GM13976 (cell line): ENCODE measurements at regions of chr1 and their contacts with region 1.

Region 1: DNA sequence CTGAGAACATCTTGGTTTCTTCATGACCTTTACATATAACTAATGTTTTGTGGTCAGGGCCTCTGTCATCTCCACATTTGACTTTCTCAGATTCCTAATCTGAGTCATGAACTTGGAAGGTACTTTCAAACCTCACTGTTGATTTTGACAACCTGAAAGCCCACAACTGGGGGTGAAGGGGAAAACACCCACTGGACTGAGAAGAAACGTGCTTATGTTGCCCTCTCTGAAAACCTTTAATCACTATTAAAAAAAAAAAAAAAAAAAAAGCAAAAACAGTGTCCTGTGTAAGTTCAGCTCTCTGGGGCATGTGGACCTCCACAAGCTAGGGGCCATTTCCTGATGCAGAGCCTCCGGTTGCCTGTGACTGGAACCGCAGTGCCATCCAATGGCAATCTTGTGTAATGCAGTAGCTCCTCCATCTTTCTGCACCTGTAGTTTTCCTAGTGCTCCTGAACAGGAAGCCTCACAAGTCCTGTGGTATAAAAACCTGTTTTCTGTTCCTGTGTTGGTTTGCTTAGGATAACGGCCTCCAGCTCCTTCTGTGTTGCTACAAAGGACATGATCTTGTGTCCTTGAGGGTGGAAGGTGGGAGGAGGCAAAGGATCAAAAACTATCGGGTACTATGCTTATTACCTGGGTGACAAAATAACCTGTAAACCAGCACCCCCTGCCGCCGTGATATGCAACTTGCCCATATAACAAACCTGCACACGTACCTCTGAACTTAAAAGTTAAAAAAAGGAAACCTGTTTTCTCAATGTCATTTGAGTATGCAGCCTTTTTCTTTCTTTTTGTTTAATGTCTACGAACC is 124.5 kb downstream of the ZNF648 start:
- DNase-seq: peak; percentile 73
- CTCF ChIP-seq: peak; percentile 77

Region 2: GRCh38 chr1:181676269-181676668 is 260.7 kb before region 1 on chr1:
- in situ Hi-C with region 1: loop called (anchors 25 kb)
- DNase-seq: peak; percentile 75
- CTCF ChIP-seq: peak; percentile 26

Region 3: DNA sequence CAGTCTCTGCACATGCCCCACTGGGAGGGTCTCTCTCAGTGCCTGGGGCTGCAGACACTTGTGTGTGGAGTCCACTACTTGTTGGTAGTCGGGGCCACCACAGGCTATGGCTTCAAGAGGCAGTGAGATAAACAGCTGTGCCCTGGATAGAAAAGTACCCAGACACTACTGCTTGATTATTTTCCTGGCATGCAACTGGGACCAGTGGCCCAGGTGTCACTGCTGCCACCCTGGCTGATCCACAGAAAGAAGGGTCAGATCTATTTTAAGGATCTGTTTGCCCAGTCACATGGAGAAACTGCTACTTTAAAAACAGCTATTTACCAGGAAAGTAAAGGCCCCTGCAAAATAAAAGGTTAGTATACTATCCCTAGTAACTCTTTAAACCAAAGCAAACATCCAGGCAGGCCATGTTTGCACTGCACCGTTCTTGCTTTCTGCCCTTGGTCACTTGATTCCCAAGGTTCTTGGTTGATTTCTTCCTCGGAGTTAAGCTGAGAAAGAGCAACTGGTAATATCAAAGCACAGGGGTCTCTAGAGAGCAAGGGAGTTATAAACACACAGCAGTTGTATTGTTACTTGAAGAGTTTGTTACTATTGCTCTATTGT is 354.7 kb after region 1 on chr1:
- in situ Hi-C with region 1: no loop called
- DNase-seq: no peak
- CTCF ChIP-seq: no peak